B cell (primary cell): ENCODE measurements at regions of chr11 and their contacts with region 1.

Region 1: GRCh38 chr11:82969811-82970210 is 68.3 kb downstream of the DDIAS start:
- DNase-seq: peak; percentile 46
- ATAC-seq: peak; percentile 76
- H3K4me3 ChIP-seq: peak overlapping the region in 1 of 5 experiments; percentile 15
- H3K4me3 Mint-ChIP-seq: peak overlapping the region; percentile 37
- H3K27ac ChIP-seq: peak overlapping the region; percentile 26 to 52
- H3K27ac Mint-ChIP-seq: peak overlapping the region; percentile 17
- H3K4me1 ChIP-seq: peaks cover 29% of the 10 kb centered on the region in 2 donors
- H3K4me1 Mint-ChIP-seq: peaks cover 43% of the 10 kb centered on the region
- H3K27me3 ChIP-seq: no peaks in the 10 kb centered on the region
- H3K27me3 Mint-ChIP-seq: no peaks in the 10 kb centered on the region
- CTCF ChIP-seq: no peak

Region 2: DNA sequence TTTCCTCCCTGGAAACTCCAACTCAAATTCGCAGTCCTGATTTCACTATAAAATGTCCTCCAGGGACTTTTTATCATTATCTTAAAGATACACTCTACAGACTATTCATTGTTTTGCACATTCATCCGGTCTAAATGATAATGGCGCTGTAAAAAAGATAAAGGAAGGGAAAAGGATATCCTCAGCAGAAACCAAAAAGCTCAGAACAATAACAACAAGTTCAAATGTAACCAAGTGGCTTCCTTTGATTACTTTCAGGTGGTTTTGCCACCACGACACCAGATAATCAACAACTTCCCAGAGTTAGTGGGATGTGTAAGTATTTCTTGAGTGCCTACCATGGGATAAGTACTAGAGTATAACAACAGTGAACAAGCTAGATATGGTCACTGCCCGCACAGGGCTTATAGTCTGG is 95.9 kb before region 1 on chr11:
- CTCF ChIA-PET with region 1: no interaction called
- POLR2A ChIA-PET with region 1: no interaction called
- intact Hi-C with region 1: no loop called
- DNase-seq: no peak
- ATAC-seq: no peak
- H3K4me3 ChIP-seq: no peak overlapping the region
- H3K4me3 Mint-ChIP-seq: no peak overlapping the region
- H3K27ac ChIP-seq: no peak overlapping the region
- H3K27ac Mint-ChIP-seq: no peak overlapping the region
- H3K4me1 ChIP-seq: no peaks in the 10 kb centered on the region
- H3K4me1 Mint-ChIP-seq: peaks cover 4% of the 10 kb centered on the region
- H3K27me3 ChIP-seq: no peaks in the 10 kb centered on the region
- H3K27me3 Mint-ChIP-seq: no peaks in the 10 kb centered on the region
- CTCF ChIP-seq: no peak

Region 3: DNA sequence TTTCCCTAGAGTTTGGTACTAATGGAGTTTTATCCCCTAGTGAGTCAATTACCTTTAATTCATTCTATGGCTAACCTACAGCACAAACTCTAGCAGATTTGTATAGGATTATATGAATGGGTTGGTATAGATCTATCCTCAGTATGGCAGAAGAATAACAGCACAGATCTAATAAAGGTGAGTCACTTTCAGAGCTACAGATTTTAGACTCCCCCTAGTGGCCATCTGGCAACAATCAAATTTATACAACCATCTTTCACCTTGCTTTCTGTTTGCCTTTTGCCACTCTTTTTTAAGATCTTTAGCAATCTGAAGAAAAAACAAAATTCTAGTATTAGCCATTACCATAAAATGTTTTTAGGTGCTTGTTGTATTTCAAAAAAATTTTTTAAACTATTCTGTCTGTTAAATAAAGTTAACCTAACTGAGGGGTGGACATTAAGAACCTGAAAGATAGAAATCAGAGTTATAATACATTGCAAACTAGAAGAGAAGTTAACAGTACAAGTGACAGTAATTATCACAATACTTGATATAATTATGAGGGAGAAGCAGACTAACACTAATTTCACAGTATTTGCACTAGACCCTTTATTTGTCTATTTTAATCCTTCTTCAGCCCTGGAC is 42.4 kb before region 1 on chr11:
- CTCF ChIA-PET with region 1: interaction called, 4 read pairs
- POLR2A ChIA-PET with region 1: no interaction called
- intact Hi-C with region 1: loop called (anchors 5 kb)
- DNase-seq: peak; percentile 76
- ATAC-seq: peak; percentile 81
- H3K4me3 ChIP-seq: no peak overlapping the region
- H3K4me3 Mint-ChIP-seq: peak overlapping the region; percentile 15
- H3K27ac ChIP-seq: no peak overlapping the region
- H3K27ac Mint-ChIP-seq: no peak overlapping the region
- H3K4me1 ChIP-seq: peaks cover 58 to 77% of the 10 kb centered on the region in 2 donors
- H3K4me1 Mint-ChIP-seq: peaks cover 67% of the 10 kb centered on the region
- H3K27me3 ChIP-seq: no peaks in the 10 kb centered on the region
- H3K27me3 Mint-ChIP-seq: no peaks in the 10 kb centered on the region
- CTCF ChIP-seq: peak; percentile 89

Region 4: GRCh38 chr11:83007909-83008580 is 38.2 kb after region 1 on chr11:
- CTCF ChIA-PET with region 1: no interaction called
- POLR2A ChIA-PET with region 1: no interaction called
- intact Hi-C with region 1: loop called (anchors 5 kb)
- DNase-seq: peak; percentile 45
- ATAC-seq: peak; percentile 39
- H3K4me3 ChIP-seq: no peak overlapping the region
- H3K4me3 Mint-ChIP-seq: peak overlapping the region; percentile 72
- H3K27ac ChIP-seq: peak overlapping the region in 1 of 2 donors; percentile 65
- H3K27ac Mint-ChIP-seq: peak overlapping the region; percentile 84
- H3K4me1 ChIP-seq: peaks cover 47 to 50% of the 10 kb centered on the region in 2 donors
- H3K4me1 Mint-ChIP-seq: peaks cover 74% of the 10 kb centered on the region
- H3K27me3 ChIP-seq: no peaks in the 10 kb centered on the region
- H3K27me3 Mint-ChIP-seq: no peaks in the 10 kb centered on the region
- CTCF ChIP-seq: no peak